ENCODE measurements at regions of chr11 and their contacts with region 1.

Region 1: GRCh38 chr11:128695539-128696221 is 1.8 kb downstream of the FLI1 start:
- DNase-seq: no peak
- H3K4me3 ChIP-seq: no peak overlapping the region
- H3K27ac ChIP-seq: no peak overlapping the region
- H3K4me1 ChIP-seq: no peaks in the 10 kb centered on the region
- H3K27me3 ChIP-seq: peaks cover 7% of the 10 kb centered on the region; the same call in 1 of the 2 replicates
- CTCF ChIP-seq: no peak

Region 2: GRCh38 chr11:128709402-128709801 is 13.7 kb after region 1 on chr11:
- CTCF ChIA-PET with region 1: no interaction called
- POLR2A ChIA-PET with region 1: interaction called, 45 read pairs
- intact Hi-C with region 1: no loop called
- DNase-seq: no peak
- H3K4me3 ChIP-seq: no peak overlapping the region
- H3K27ac ChIP-seq: no peak overlapping the region
- H3K4me1 ChIP-seq: no peaks in the 10 kb centered on the region
- H3K27me3 ChIP-seq: peaks cover 3% of the 10 kb centered on the region; the same call in 1 of the 2 replicates
- CTCF ChIP-seq: no peak

Region 3: GRCh38 chr11:128848815-128849455 is 153.3 kb after region 1 on chr11:
- CTCF ChIA-PET with region 1: no interaction called
- POLR2A ChIA-PET with region 1: interaction called, 32 read pairs
- intact Hi-C with region 1: no loop called
- DNase-seq: peak in 1 of 2 experiments; percentile 46
- H3K4me3 ChIP-seq: no peak overlapping the region
- H3K27ac ChIP-seq: no peak overlapping the region
- H3K4me1 ChIP-seq: no peaks in the 10 kb centered on the region
- H3K27me3 ChIP-seq: peaks cover 15% of the 10 kb centered on the region; the same call in 1 of the 2 replicates
- CTCF ChIP-seq: peak; percentile 72

Region 4: GRCh38 chr11:129852125-129852740 is 1156.6 kb after region 1 on chr11:
- CTCF ChIA-PET with region 1: interaction called, 17 read pairs
- POLR2A ChIA-PET with region 1: no interaction called
- intact Hi-C with region 1: no loop called
- DNase-seq: peak in 1 of 2 experiments; percentile 51
- H3K4me3 ChIP-seq: no peak overlapping the region
- H3K27ac ChIP-seq: peak overlapping the region; percentile 87
- H3K4me1 ChIP-seq: peaks cover 64% of the 10 kb centered on the region
- H3K27me3 ChIP-seq: no peaks in the 10 kb centered on the region
- CTCF ChIP-seq: no peak